CD8-positive, alpha-beta memory T cell (primary cell): ENCODE measurements at regions of chr20 and their contacts with region 1.

Region 1: GRCh38 chr20:297098-297924 is at the start of gene ZCCHC3:
- DNase-seq: peak; percentile 73 to 89 (median 81)
- H3K4me3 ChIP-seq: peak within 1 kb of the TSS; percentile 95
- H3K4me3 Mint-ChIP-seq: peak within 1 kb of the TSS; percentile 96 to 100 (median 99)
- H3K27ac ChIP-seq: peak within 1 kb of the TSS; percentile 84
- H3K27ac Mint-ChIP-seq: peak within 1 kb of the TSS; percentile 98 to 100 (median 99)
- H3K4me1 ChIP-seq: peaks cover 26% of the 10 kb centered on the region
- H3K4me1 Mint-ChIP-seq: peaks cover 39 to 45% (median 45%) of the 10 kb centered on the region in 3 donors
- H3K27me3 ChIP-seq: no peaks in the 10 kb centered on the region
- H3K27me3 Mint-ChIP-seq: peaks cover 0 to 2% of the 10 kb centered on the region in 2 donors
- total RNA-seq, gene ZCCHC3: 25.3 to 25.4 TPM

Region 2: GRCh38 chr20:324177-325044 is 27.1 kb after region 1 on chr20:
- CTCF ChIA-PET with region 1: interaction called, 14 read pairs
- POLR2A ChIA-PET with region 1: interaction called, 62 read pairs
- DNase-seq: peak; percentile 83 to 92 (median 87)
- H3K4me3 ChIP-seq: peak overlapping the region; percentile 62
- H3K4me3 Mint-ChIP-seq: peak overlapping the region; percentile 91 to 100 (median 92)
- H3K27ac ChIP-seq: peak overlapping the region; percentile 28
- H3K27ac Mint-ChIP-seq: peak overlapping the region; percentile 72 to 96 (median 92)
- H3K4me1 ChIP-seq: peaks cover 22% of the 10 kb centered on the region
- H3K4me1 Mint-ChIP-seq: peaks cover 0 to 30% (median 18%) of the 10 kb centered on the region in 3 donors
- H3K27me3 ChIP-seq: no peaks in the 10 kb centered on the region
- H3K27me3 Mint-ChIP-seq: peaks cover 0 to 5% of the 10 kb centered on the region in 2 donors